K562 (cell line): ENCODE measurements at regions of chr1 and their contacts with region 1.

Region 1: DNA sequence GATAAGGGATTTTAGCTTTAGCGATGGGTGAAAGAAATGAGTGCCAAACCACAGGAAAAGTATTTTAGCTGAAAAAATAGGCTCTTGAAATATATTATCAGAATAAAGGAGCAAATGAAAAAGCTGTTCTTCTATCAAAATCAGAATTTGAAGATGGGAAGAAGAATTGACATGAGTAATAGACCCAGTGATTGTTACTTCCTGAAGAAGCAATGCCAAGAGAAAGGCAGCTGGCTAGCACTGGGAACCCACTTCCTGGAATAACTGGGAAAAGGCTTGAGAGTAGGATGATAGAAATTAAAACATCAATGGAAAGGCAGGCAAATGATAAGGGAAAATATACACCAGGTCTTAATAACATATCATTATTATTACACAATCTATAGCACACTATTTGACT is 29.9 kb upstream of the LYPLAL1 start:
- DNase-seq: no peak
- ATAC-seq: no peak
- H3K4me3 ChIP-seq: no peak overlapping the region
- H3K27ac ChIP-seq: no peak overlapping the region
- H3K4me1 ChIP-seq: peaks cover 0 to 19% of the 10 kb centered on the region in 2 experiments; a peak in 3 of 5 replicates
- H3K27me3 ChIP-seq: no peaks in the 10 kb centered on the region
- CTCF ChIP-seq: no peak
- EP300 ChIP-seq: no peak
- POLR2A ChIP-seq: no peak
- RAD21 ChIP-seq: no peak

Region 2: GRCh38 chr1:218755128-218755527 is 388.6 kb before region 1 on chr1:
- CTCF ChIA-PET with region 1: no interaction called
- POLR2A ChIA-PET with region 1: no interaction called
- in situ Hi-C with region 1: no loop called
- intact Hi-C with region 1: no loop called
- DNase-seq: no peak
- ATAC-seq: no peak
- H3K4me3 ChIP-seq: no peak overlapping the region
- H3K27ac ChIP-seq: no peak overlapping the region
- H3K4me1 ChIP-seq: no peaks in the 10 kb centered on the region
- H3K27me3 ChIP-seq: no peaks in the 10 kb centered on the region
- CTCF ChIP-seq: no peak
- EP300 ChIP-seq: no peak
- POLR2A ChIP-seq: no peak
- RAD21 ChIP-seq: no peak

Region 3: GRCh38 chr1:219088778-219089557 is 54.8 kb before region 1 on chr1:
- CTCF ChIA-PET with region 1: no interaction called
- POLR2A ChIA-PET with region 1: no interaction called
- in situ Hi-C with region 1: no loop called
- intact Hi-C with region 1: loop called (anchors 1 kb)
- DNase-seq: peak; percentile 69 to 92 (median 80)
- ATAC-seq: peak; percentile 99
- H3K4me3 ChIP-seq: no peak overlapping the region
- H3K27ac ChIP-seq: peak overlapping the region; percentile 93
- H3K4me1 ChIP-seq: peaks cover 4 to 33% of the 10 kb centered on the region in 2 experiments; a peak in 4 of 5 replicates
- H3K27me3 ChIP-seq: no peaks in the 10 kb centered on the region
- CTCF ChIP-seq: no peak
- EP300 ChIP-seq: peak; percentile 92
- POLR2A ChIP-seq: peak; percentile 58
- RAD21 ChIP-seq: peak in 1 of 2 experiments; percentile 50; a peak in 2 of 4 replicates

Region 4: DNA sequence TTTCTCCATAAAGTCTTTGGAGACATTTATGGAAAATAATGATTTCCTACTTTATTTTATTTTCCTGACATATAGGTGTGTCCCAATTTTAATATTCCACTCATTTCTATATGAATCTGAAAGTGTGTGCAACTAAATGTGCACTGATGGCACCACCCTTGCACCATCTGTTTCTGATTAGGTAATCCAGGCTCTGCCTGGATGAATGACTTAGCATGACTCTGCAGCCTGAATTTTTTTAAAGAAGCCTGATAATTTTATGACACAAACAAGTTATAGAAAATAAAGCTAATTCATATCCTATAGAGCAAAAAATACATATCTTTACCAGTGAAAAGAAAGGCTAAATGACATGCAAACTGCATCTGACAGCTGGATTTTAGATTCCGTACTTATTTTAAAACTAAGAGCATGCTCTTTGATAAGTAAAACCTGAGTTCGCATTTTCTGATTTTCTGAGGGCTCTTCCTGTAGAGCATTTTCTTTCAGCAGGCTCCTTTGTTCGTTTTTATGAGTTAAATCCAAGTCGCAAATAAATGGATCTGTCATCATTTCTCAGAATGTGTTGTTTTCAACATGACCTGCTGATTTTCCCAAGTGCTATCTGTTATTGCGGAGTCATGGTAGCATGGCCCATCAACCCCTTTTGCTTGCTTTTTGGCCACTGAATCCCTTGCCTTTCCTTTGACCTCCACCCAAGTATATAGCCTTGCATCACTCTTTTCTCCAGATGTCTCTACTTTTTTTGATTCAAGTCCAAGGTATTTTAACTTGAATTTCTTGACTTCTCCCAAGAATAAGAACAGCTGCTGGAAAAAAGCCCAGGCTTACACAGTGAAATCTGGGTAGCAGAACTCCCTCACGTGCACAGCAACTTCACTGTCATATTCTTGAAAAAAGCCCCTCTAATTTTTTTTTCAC is 22.9 kb before region 1 on chr1:
- CTCF ChIA-PET with region 1: no interaction called
- POLR2A ChIA-PET with region 1: interaction called, 4 read pairs
- in situ Hi-C with region 1: no loop called
- intact Hi-C with region 1: loop called (anchors 2 kb)
- DNase-seq: peak; percentile 65 to 87 (median 72)
- ATAC-seq: peak; percentile 92
- H3K4me3 ChIP-seq: no peak overlapping the region
- H3K27ac ChIP-seq: peak overlapping the region; percentile 88
- H3K4me1 ChIP-seq: peaks cover 0 to 24% of the 10 kb centered on the region in 2 experiments; a peak in 2 of 5 replicates
- H3K27me3 ChIP-seq: no peaks in the 10 kb centered on the region
- CTCF ChIP-seq: no peak
- EP300 ChIP-seq: peak; percentile 95
- POLR2A ChIP-seq: no peak
- RAD21 ChIP-seq: no peak

Region 5: DNA sequence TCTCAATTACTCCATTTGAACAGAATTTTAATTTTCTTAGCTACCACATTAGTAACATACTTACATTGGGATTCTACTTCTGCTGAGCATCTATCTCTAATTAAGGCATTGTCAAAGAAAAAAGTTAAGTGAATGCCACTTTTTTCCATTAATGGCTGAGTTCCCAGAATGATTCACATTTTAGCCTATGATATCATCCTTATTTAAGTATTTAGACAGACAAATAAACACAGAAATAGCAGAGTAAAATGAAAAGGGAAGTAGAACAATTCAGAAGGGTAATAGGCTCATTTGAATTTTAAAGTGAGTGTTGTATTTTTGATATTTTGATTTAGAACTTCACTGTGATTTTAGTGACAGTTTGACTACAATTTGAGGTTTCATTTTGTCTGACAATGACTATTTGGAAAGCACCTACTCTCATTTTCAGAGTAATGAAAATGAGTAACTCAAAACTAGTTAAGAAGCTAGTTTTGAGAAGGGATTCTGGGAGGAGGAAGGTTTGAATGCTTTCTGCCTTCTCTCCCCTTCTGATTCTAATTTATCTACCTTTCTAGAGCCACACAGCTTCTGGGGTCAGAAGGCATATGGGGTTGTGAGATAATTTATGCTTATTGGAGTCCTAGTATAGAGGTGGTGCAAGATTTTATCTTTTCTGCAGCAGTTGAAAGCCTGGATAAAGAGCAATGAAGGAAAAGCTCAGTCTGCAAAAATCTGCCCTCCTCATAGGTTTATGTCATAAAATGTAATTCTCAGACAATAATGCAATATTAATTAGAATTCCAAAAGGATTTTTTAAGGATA is 45.5 kb after region 1 on chr1:
- CTCF ChIA-PET with region 1: no interaction called
- POLR2A ChIA-PET with region 1: no interaction called
- in situ Hi-C with region 1: loop called (anchors 5 kb)
- intact Hi-C with region 1: no loop called
- DNase-seq: peak in 2 of 4 experiments; percentile 30 to 38
- ATAC-seq: peak; percentile 56
- H3K4me3 ChIP-seq: no peak overlapping the region
- H3K27ac ChIP-seq: no peak overlapping the region
- H3K4me1 ChIP-seq: peaks cover 0 to 10% of the 10 kb centered on the region in 2 experiments; a peak in 2 of 5 replicates
- H3K27me3 ChIP-seq: no peaks in the 10 kb centered on the region
- CTCF ChIP-seq: no peak
- EP300 ChIP-seq: no peak; the same call in 1 of the 2 replicates
- POLR2A ChIP-seq: no peak
- RAD21 ChIP-seq: no peak